GM13977 (cell line): ENCODE measurements at regions of chr7 and their contacts with region 1.

Region 1: GRCh38 chr7:116588641-116589594 is 64.1 kb downstream of the CAV1 start:
- DNase-seq: peak; percentile 9
- CTCF ChIP-seq: peak; percentile 61

Region 2: GRCh38 chr7:116165717-116166116 is 423.2 kb before region 1 on chr7:
- in situ Hi-C with region 1: loop called (anchors 10 kb)
- DNase-seq: no peak
- CTCF ChIP-seq: no peak

Region 3: DNA sequence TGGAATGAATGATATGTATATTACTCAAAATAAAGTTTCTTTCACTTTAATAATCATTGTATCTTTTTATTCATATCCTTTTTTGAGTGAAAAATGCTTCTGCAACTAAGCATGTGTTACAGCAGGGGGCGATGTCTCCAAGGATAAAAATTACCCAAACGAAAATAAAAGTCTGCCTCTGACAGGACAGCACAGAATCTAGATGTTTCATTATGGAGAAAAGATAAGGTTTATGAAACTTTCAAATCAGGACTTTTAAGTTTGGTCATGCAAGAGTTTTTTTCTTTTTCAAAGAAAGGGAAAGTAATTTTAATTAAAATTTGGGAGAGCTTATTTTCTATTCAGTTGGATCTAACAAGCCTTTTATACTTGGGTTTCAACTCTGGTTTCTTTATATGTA is 330.2 kb before region 1 on chr7:
- in situ Hi-C with region 1: loop called (anchors 10 kb)
- DNase-seq: peak; percentile 24
- CTCF ChIP-seq: peak; percentile 73

Region 4: GRCh38 chr7:116426428-116427156 is 162.3 kb before region 1 on chr7:
- in situ Hi-C with region 1: no loop called
- DNase-seq: no peak
- CTCF ChIP-seq: no peak